ENCODE measurements at regions of chr5 and their contacts with region 1.

Region 1: GRCh38 chr5:133341915-133342710 is 270.2 kb downstream of the FSTL4 start:
- DNase-seq: peak; percentile 29
- ATAC-seq: peak; percentile 68
- H3K4me3 Mint-ChIP-seq: no peak overlapping the region
- H3K27ac Mint-ChIP-seq: no peak overlapping the region
- H3K4me1 Mint-ChIP-seq: peaks cover 63% of the 10 kb centered on the region
- H3K27me3 Mint-ChIP-seq: peaks cover 21% of the 10 kb centered on the region
- CTCF ChIP-seq: no peak

Region 2: GRCh38 chr5:133404724-133405123 is 62.6 kb after region 1 on chr5:
- CTCF ChIA-PET with region 1: interaction called, 14 read pairs
- POLR2A ChIA-PET with region 1: no interaction called
- DNase-seq: no peak
- ATAC-seq: peak; percentile 58
- H3K4me3 Mint-ChIP-seq: no peak overlapping the region
- H3K27ac Mint-ChIP-seq: no peak overlapping the region
- H3K4me1 Mint-ChIP-seq: peaks cover 36% of the 10 kb centered on the region
- H3K27me3 Mint-ChIP-seq: no peaks in the 10 kb centered on the region
- CTCF ChIP-seq: no peak

Measured in WTC11 (cell line).